Activated B cell treated with CpG ODN at 0.5 μM for 24 hours (primary cell): ENCODE measurements at regions of chr1 and their contacts with region 1.

Region 1: DNA sequence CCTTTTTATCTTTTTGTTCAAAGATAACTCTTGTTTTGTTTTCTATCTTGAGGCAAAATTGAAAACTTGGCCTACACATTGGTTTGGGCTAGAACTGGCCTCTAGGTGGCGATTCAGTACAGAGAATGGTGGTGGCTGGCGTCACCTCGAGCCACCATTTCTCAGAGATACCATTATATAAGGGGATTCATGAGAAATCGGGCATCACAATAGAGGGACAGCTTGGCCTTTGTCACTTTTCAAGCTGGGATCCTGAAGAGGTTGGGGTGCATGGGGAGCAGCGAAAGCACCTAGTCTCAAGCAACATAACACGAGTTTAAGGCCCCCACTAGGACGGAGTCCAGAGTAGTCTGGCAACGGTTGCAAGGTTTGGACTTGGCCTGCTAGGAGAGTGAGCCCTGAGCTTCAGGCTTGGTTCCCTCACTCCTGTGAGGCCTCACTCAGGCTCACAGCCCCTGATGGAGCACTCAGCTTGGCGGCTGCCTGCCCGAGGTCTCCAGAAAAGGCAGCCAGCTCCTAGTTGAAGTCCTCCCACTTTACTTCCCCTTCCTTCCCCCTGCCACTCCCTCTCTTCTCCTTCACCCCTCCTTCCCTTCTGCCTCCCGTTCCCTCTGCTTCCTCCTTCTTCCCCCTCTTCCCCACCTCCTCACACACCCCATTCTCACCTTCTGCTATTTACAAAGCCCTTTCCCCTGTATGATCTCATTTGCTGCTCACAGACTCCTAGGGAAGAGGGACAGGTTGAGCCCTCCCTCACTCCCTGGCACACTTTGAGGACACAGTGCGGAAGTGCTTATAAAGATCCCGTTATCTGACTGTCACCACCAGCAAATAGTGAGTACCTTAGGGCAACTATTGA is 67.8 kb downstream of the LRIG2 start:
- DNase-seq: no peak
- ATAC-seq: peak; percentile 76
- H3K4me3 Mint-ChIP-seq: peak overlapping the region; percentile 42
- H3K27ac Mint-ChIP-seq: no peak overlapping the region
- H3K4me1 Mint-ChIP-seq: peaks cover 4% of the 10 kb centered on the region
- H3K27me3 Mint-ChIP-seq: no peaks in the 10 kb centered on the region
- CTCF ChIP-seq: peak; percentile 19

Region 2: GRCh38 chr1:113452921-113453770 is 312.3 kb after region 1 on chr1:
- CTCF ChIA-PET with region 1: interaction called, 16 read pairs
- POLR2A ChIA-PET with region 1: no interaction called
- intact Hi-C with region 1: loop called (anchors 1 kb)
- DNase-seq: no peak
- ATAC-seq: no peak
- H3K4me3 Mint-ChIP-seq: no peak overlapping the region
- H3K27ac Mint-ChIP-seq: no peak overlapping the region
- H3K4me1 Mint-ChIP-seq: no peaks in the 10 kb centered on the region
- H3K27me3 Mint-ChIP-seq: peaks cover 6% of the 10 kb centered on the region
- CTCF ChIP-seq: no peak

Region 3: GRCh38 chr1:113677250-113678158 is 536.7 kb after region 1 on chr1:
- CTCF ChIA-PET with region 1: interaction called, 6 read pairs
- POLR2A ChIA-PET with region 1: no interaction called
- intact Hi-C with region 1: loop called (anchors 1 kb)
- DNase-seq: no peak
- ATAC-seq: peak; percentile 34
- H3K4me3 Mint-ChIP-seq: no peak overlapping the region
- H3K27ac Mint-ChIP-seq: no peak overlapping the region
- H3K4me1 Mint-ChIP-seq: no peaks in the 10 kb centered on the region
- H3K27me3 Mint-ChIP-seq: no peaks in the 10 kb centered on the region
- CTCF ChIP-seq: no peak

Region 4: GRCh38 chr1:113963281-113963906 is 822.6 kb after region 1 on chr1:
- CTCF ChIA-PET with region 1: no interaction called
- POLR2A ChIA-PET with region 1: no interaction called
- intact Hi-C with region 1: loop called (anchors 5 kb)
- DNase-seq: no peak
- ATAC-seq: no peak
- H3K4me3 Mint-ChIP-seq: no peak overlapping the region
- H3K27ac Mint-ChIP-seq: no peak overlapping the region
- H3K4me1 Mint-ChIP-seq: no peaks in the 10 kb centered on the region
- H3K27me3 Mint-ChIP-seq: no peaks in the 10 kb centered on the region
- CTCF ChIP-seq: no peak

Region 5: GRCh38 chr1:114282751-114283403 is 1142.1 kb after region 1 on chr1:
- CTCF ChIA-PET with region 1: interaction called, 13 read pairs
- POLR2A ChIA-PET with region 1: no interaction called
- intact Hi-C with region 1: loop called (anchors 2 kb)
- DNase-seq: peak; percentile 56
- ATAC-seq: peak; percentile 74
- H3K4me3 Mint-ChIP-seq: no peak overlapping the region
- H3K27ac Mint-ChIP-seq: no peak overlapping the region
- H3K4me1 Mint-ChIP-seq: no peaks in the 10 kb centered on the region
- H3K27me3 Mint-ChIP-seq: peaks cover 2% of the 10 kb centered on the region
- CTCF ChIP-seq: no peak